PC-3 (cell line): ENCODE measurements at regions of chrX and their contacts with region 1.

Region 1: DNA sequence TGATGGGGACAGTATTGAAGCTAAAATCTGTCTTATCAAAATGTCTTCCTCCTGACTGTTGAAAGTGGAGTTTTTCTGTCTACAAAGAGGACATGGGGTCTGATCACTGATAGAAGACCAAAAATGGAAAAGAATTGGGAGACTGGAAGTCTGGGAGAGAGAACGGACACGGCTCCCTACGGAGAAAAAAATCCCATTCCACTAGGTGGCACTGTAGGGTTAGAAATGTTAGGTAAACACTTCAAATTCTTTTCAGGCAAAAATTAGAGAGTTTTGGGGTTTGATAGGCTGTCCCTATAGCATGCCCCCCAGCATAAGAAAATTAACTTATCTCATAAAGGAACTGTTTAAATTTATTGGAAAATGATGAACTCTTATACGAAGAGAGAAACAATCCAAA is 200.5 kb downstream of the FAM133A start:
- DNase-seq: peak; percentile 63
- ATAC-seq: no peak
- H3K4me3 ChIP-seq: no peak overlapping the region
- H3K27ac ChIP-seq: no peak overlapping the region
- H3K4me1 ChIP-seq: no peaks in the 10 kb centered on the region
- H3K27me3 ChIP-seq: no peaks in the 10 kb centered on the region
- CTCF ChIP-seq: peak; percentile 71

Region 2: DNA sequence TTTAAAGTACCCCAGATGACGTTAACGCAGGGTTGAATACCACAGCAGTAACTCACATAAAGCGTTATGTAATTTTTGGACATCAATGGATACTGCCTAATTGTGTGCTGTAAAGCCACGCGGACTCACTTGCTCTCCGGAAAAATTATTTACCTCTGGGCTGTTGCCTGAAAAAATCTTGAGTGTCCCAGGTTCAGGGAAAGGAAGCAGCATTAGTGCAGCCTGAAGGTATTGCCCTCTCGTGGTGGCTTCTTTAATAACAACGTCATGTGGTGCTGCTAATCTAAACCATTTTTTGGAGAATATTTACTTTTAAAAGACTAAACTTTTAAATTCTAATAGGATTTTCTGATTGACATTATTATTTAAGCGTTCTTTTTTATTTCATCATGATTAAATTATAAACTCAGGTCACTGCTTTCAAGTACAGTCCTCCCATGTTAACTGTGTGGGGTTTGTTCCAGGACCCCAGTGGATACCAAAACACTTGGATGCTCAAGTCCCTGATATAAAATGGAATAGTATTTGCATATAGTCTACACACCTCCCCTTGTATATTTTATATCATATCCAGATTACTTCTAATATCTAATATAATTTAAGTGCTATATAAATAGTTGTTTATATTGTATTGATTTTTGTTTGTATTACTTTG is 184.3 kb after region 1 on chrX:
- CTCF ChIA-PET with region 1: no interaction called
- POLR2A ChIA-PET with region 1: no interaction called
- intact Hi-C with region 1: loop called (anchors 2 kb)
- DNase-seq: peak; percentile 39
- ATAC-seq: peak; percentile 31; the same call in 1 of the 2 replicates
- H3K4me3 ChIP-seq: 0 out of 2 replicates have a peak overlapping the region, but pooled peaks have one; percentile 27
- H3K27ac ChIP-seq: no peak overlapping the region
- H3K4me1 ChIP-seq: no peaks in the 10 kb centered on the region
- H3K27me3 ChIP-seq: no peaks in the 10 kb centered on the region
- CTCF ChIP-seq: peak; percentile 56

Region 3: GRCh38 chrX:94288325-94288724 is 413.8 kb after region 1 on chrX:
- CTCF ChIA-PET with region 1: no interaction called
- POLR2A ChIA-PET with region 1: no interaction called
- intact Hi-C with region 1: loop called (anchors 5 kb)
- DNase-seq: peak; percentile 2
- ATAC-seq: no peak
- H3K4me3 ChIP-seq: no peak overlapping the region
- H3K27ac ChIP-seq: no peak overlapping the region
- H3K4me1 ChIP-seq: no peaks in the 10 kb centered on the region
- H3K27me3 ChIP-seq: no peaks in the 10 kb centered on the region
- CTCF ChIP-seq: peak; percentile 46